Posterior vena cava (tissue), 2 donors: ENCODE measurements at regions of chr7 and their contacts with region 1.

Region 1: GRCh38 chr7:21718391-21718790 is 175.6 kb downstream of the DNAH11 start:
- DNase-seq: no peak

Region 2: DNA sequence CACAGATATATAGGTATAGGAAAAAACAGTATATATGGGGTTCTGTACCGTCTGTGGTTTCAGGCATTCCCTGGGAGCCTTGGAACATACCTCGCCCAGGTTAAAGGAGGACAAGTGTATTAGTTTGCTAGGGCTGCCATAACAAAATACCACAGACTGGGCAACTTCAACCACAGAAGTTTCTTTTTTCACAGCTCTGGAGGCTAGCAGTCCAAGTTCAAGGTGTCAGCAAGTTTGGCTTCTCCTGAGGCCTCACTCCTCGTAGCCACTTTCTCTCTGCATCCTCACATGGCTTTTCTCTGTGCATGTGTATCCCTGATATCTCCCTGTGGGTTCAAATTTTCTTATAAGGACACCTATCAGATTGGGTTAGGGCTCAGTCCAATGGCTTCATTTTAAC is 13.6 kb after region 1 on chr7:
- intact Hi-C with region 1: no loop called
- DNase-seq: no peak

Region 3: GRCh38 chr7:21743493-21743892 is 25.1 kb after region 1 on chr7:
- intact Hi-C with region 1: loop called in 1 of 2 experiments (anchors 1 kb)
- DNase-seq: no peak

Region 4: DNA sequence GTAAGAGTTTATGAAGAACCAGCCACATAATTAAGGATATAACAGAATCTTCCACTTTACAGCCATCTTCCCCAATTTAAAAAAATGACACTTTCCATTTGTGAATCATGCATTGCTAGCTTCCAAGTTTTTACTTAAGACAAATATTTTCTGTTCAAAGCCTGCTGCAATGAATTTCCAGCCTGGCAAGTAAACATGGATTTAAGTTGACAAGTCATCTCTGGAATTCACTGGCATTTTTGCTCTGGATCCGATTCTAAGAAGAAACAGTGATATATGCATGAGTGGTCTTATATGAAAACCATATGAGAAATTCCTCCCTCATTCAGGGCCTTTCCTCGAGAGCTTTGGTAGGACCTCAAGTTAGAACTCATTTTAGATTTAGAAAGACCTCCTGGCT is 343.4 kb after region 1 on chr7:
- intact Hi-C with region 1: no loop called
- DNase-seq: no peak